ENCODE measurements at regions of chr10 and their contacts with region 1.

Region 1: DNA sequence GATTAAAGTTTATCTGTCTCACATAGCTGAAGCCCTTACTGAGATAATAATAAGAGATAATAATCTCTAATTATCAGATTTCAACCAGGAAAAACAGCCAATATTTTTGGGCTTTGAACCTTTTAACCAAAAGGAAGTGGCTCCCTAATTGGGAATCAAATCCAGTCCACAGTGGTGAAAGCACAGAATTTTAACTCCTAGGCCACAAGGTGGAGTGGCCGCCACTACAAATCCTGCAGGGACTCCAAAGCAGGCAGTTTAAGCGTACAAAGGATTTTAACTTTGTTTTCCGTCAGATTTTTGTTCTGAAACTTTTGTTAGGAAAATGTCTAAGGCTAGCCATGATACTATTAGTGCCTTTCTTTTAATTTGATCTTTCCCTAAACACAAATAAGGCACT is 99.6 kb upstream of the CCNY start:
- DNase-seq: no peak

Region 2: GRCh38 chr10:35218339-35218955 is 18.3 kb before region 1 on chr10:
- CTCF ChIA-PET with region 1: no interaction called
- POLR2A ChIA-PET with region 1: no interaction called
- DNase-seq: peak; percentile 62

Region 3: DNA sequence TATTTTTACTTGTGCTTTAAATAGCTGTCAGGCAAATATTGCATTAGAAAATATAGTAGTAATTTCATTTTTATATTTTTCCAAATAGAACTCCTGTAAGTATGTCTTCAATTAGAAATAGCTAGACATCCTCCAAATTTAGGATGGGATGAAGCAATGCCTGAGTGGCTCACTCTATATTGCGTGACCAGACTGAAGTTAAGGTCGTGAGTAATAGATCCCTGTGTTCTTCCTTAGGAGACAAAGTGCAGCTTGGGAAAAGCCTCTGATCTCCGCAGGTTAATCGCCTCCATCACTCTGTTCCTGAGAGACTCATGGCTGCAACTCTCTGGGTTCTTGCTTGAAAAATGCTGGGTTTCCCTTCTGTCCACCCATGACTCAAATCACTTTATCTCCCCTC is 1403.9 kb after region 1 on chr10:
- CTCF ChIA-PET with region 1: interaction called, 12 read pairs
- POLR2A ChIA-PET with region 1: no interaction called
- DNase-seq: no peak